CD14-positive monocyte (primary cell): ENCODE measurements at regions of chr11 and their contacts with region 1.

Region 1: GRCh38 chr11:61028272-61028761 is 56.8 kb downstream of the CD6 start:
- DNase-seq: peak; percentile 70 to 88 (median 81)
- H3K4me3 ChIP-seq: no peak overlapping the region
- H3K4me3 Mint-ChIP-seq: peak overlapping the region; percentile 6 to 53
- H3K27ac ChIP-seq: peak overlapping the region in 1 of 2 donors; percentile 45
- H3K27ac Mint-ChIP-seq: peak overlapping the region; percentile 22 to 91 (median 85)
- H3K4me1 ChIP-seq: peaks cover 43 to 47% of the 10 kb centered on the region in 2 donors
- H3K4me1 Mint-ChIP-seq: peaks cover 49% of the 10 kb centered on the region
- H3K27me3 ChIP-seq: peaks cover 0 to 4% of the 10 kb centered on the region in 2 donors
- H3K27me3 Mint-ChIP-seq: peaks cover 10 to 27% (median 14%) of the 10 kb centered on the region in 3 donors
- CTCF ChIP-seq: no peak

Region 2: DNA sequence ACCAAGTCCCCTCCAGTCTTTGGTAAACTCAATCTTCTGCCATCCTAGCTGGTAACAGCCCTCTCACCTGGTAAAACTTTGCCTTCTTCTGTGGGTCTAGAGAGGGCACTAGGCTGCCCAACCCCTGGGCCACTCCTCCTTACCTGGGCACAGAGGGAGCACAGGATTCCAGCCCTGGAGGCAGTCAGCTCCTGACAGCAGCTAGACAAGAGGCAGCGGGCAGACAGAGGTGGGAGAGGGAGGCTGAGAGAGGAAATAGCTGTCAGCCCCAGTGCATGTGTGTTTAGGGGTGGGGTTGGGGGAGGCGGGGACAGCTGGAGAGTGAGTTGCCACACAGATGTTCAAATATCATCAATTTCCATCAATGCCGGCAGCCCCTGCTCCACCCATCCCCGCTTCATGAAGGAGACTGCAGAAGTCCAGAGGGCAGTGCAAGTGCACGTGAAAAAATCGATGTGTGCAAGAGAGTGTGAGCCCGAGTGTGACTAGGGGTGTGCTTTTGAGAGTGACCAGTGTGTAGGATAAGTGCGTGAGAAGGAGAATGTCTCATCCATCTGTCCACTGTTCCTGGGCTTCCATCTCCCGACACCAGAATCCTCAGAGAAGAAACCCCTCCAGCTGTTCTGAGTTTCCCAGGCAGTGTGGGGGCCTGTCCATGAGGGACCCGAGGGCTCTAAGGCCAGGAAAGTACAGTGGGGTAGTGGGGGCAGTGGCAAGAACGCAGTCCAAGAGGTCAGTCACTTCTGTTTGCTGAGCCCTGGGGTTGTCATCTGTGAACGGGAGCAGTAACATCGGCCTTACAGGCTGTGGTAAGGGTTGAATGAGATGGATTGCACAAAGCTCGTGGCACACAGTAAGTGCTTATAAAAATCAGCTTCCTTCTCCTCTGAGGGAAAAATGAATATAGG is 172.3 kb before region 1 on chr11 and contains the start of gene PTGDR2:
- intact Hi-C with region 1: no loop called
- DNase-seq: no peak
- H3K4me3 ChIP-seq: no peak within 1 kb of the TSS
- H3K4me3 Mint-ChIP-seq: peak within 1 kb of the TSS in 1 of 2 donors; percentile 73
- H3K27ac ChIP-seq: no peak within 1 kb of the TSS
- H3K27ac Mint-ChIP-seq: peak within 1 kb of the TSS in 1 of 7 donors; percentile 83
- H3K4me1 ChIP-seq: peaks cover 20 to 34% of the 10 kb centered on the region in 2 donors
- H3K4me1 Mint-ChIP-seq: peaks cover 31% of the 10 kb centered on the region
- H3K27me3 ChIP-seq: peaks cover 0 to 6% of the 10 kb centered on the region in 2 donors
- H3K27me3 Mint-ChIP-seq: peaks cover 11 to 21% (median 11%) of the 10 kb centered on the region in 3 donors
- CTCF ChIP-seq: no peak
- polyA plus RNA-seq, gene PTGDR2: 0.32 to 0.65 (median 0.46) TPM

Region 3: GRCh38 chr11:60985991-60986915 is 42.1 kb before region 1 on chr11:
- intact Hi-C with region 1: no loop called
- DNase-seq: peak in 2 of 3 donors; percentile 17 to 33
- H3K4me3 ChIP-seq: no peak overlapping the region
- H3K4me3 Mint-ChIP-seq: no peak overlapping the region
- H3K27ac ChIP-seq: no peak overlapping the region
- H3K27ac Mint-ChIP-seq: peak overlapping the region in 3 of 7 donors; percentile 0 to 72 (median 68)
- H3K4me1 ChIP-seq: peaks cover 7 to 13% of the 10 kb centered on the region in 2 donors
- H3K4me1 Mint-ChIP-seq: peaks cover 21% of the 10 kb centered on the region
- H3K27me3 ChIP-seq: no peaks in the 10 kb centered on the region
- H3K27me3 Mint-ChIP-seq: peaks cover 10 to 26% (median 11%) of the 10 kb centered on the region in 3 donors
- CTCF ChIP-seq: no peak

Region 4: GRCh38 chr11:61061081-61061826 is 32.9 kb after region 1 on chr11:
- intact Hi-C with region 1: loop called (anchors 2 to 5 kb)
- DNase-seq: peak; percentile 91 to 99 (median 93)
- H3K4me3 ChIP-seq: peak overlapping the region in 1 of 3 experiments; percentile 2
- H3K4me3 Mint-ChIP-seq: peak overlapping the region; percentile 34 to 72
- H3K27ac ChIP-seq: peak overlapping the region; percentile 60 to 69
- H3K27ac Mint-ChIP-seq: peak overlapping the region; percentile 89 to 96 (median 94)
- H3K4me1 ChIP-seq: peaks cover 32 to 34% of the 10 kb centered on the region in 2 donors
- H3K4me1 Mint-ChIP-seq: peaks cover 42% of the 10 kb centered on the region
- H3K27me3 ChIP-seq: no peaks in the 10 kb centered on the region
- H3K27me3 Mint-ChIP-seq: peaks cover 3 to 11% (median 4%) of the 10 kb centered on the region in 3 donors
- CTCF ChIP-seq: no peak